Activated CD4-positive, alpha-beta T cell treated with anti-CD3 and anti-CD28 coated beads, Interleukin-2, amount 10 ng/mL, durations not matched to agents 7 days and 5 days (primary cell): ENCODE measurements at regions of chr1 and their contacts with region 1.

Region 1: DNA sequence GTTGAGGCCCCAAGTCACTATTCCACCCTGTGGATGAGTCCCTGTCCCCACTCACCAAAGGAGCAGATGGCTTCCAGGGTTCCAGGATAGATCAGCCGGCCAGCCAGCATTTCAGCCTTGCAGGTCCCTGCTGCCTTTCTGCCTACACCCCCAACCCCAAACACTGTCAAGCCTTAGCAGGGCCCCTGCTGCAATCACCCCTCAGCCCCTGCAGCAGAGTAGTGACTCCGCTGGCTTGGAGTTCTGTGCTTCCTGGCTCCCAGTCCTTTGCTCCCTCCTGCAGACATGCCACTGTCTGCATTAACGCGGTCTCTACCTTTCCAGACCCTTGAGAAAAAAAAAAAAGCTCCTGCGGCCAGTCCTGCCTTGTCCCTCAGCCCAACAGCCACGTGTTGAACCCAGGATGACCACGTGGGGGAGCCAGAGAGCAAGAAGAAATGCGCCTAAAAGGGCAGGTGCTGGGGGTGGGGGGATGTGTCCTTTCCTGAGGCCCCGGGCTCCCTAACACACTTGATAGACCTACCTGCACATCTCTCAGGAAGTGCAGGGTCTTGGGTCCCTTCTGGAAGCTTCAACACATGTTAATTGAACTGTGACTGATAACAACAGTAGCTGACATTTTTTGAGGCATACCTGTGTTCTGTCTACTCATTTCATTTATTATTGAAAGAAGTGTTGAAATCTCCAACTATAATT is 37.4 kb downstream of the RASSF5 start:
- DNase-seq: peak; percentile 85
- H3K4me3 Mint-ChIP-seq: no peak overlapping the region
- H3K27ac Mint-ChIP-seq: peak overlapping the region; percentile 60
- H3K4me1 Mint-ChIP-seq: peaks cover 25% of the 10 kb centered on the region
- H3K27me3 Mint-ChIP-seq: no peaks in the 10 kb centered on the region

Region 2: DNA sequence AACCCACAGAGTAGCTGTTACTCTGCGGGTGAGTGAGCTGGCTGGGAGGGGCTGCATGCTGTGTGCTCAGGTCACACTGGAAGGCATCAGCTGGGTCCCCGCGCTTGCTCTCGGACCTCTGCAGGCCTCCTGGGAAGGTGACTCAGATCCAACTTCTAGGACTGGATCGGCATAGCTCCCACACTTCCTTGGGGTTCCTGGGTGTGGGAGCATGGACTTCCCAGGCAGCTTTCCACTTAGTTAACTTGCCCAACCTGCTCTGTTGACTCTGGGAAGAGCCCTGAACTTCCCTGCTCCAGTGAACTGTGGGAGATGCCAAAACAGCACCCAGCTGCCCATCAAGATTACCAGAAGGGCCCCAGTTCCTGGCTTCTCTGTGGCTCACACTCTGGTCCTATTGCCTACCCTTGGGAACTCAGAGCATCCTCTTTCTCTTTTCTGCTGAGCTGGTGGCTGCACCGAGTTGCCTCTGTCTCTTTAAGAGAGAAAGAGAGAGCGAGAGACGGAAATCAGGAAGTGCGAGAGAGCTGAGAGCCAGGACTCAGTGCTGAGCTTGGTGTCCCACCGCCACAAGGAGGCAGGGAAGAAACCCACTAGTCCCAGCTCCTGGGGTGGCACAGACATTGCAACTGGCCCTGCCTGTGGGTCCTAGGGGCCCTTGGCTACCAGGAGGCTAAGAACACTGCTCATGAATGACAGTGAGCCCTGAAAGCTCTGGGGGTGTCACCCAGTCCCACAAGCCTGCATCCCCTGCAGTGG is 74.6 kb before region 1 on chr1 and contains the start of gene IKBKE:
- CTCF ChIA-PET with region 1: interaction called, 10 read pairs
- POLR2A ChIA-PET with region 1: no interaction called
- DNase-seq: peak; percentile 73
- H3K4me3 Mint-ChIP-seq: peak within 1 kb of the TSS; percentile 78
- H3K27ac Mint-ChIP-seq: peak within 1 kb of the TSS; percentile 72
- H3K4me1 Mint-ChIP-seq: peaks cover 88% of the 10 kb centered on the region
- H3K27me3 Mint-ChIP-seq: no peaks in the 10 kb centered on the region
- total RNA-seq, gene IKBKE: 72.6 to 85.1 TPM

Region 3: DNA sequence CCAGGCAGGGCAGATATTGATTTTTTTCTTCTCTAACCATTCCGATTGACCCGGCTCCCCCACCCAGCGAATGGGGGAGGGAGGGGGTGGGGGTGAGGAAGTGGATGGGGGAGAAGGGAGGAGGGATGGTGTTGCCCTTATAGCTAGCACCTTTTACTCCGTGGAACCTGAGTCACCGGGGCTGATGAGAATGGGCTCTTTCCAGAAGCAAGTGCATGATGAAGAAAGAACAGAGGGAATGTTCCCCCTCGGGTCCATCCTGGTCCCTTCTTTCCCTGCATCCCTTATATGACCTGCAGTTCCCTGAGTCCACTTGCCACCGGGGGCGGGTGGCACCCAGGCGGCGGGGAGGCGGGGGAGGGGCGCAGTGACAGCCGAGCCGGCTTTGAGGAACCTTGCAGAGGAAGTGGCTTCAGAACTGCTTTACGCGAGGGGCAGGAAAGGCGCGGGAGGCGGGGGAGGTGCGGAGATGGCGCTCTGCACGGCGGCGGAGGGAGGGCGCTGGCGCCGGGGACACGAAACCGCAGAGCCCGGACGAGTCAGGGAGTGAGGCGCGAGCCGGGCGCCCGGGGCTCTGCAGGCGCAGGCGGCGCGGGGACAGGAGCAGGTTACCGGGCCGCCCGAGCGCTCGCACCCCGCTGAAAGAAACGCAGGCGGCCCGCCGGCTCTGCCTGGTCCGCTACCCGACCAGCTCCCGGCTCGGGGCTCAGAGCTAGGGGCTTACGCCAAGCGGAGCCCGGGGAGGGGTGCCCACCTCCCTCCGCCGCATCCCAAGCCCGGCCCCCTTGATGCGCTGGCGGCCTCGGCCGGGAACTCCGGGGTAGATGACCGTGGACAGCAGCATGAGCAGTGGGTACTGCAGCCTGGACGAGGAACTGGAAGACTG is 12.3 kb after region 1 on chr1:
- CTCF ChIA-PET with region 1: interaction called, 41 read pairs
- POLR2A ChIA-PET with region 1: no interaction called
- DNase-seq: peak; percentile 92
- H3K4me3 Mint-ChIP-seq: peak overlapping the region; percentile 87
- H3K27ac Mint-ChIP-seq: peak overlapping the region; percentile 92
- H3K4me1 Mint-ChIP-seq: peaks cover 72% of the 10 kb centered on the region
- H3K27me3 Mint-ChIP-seq: no peaks in the 10 kb centered on the region

Region 4: DNA sequence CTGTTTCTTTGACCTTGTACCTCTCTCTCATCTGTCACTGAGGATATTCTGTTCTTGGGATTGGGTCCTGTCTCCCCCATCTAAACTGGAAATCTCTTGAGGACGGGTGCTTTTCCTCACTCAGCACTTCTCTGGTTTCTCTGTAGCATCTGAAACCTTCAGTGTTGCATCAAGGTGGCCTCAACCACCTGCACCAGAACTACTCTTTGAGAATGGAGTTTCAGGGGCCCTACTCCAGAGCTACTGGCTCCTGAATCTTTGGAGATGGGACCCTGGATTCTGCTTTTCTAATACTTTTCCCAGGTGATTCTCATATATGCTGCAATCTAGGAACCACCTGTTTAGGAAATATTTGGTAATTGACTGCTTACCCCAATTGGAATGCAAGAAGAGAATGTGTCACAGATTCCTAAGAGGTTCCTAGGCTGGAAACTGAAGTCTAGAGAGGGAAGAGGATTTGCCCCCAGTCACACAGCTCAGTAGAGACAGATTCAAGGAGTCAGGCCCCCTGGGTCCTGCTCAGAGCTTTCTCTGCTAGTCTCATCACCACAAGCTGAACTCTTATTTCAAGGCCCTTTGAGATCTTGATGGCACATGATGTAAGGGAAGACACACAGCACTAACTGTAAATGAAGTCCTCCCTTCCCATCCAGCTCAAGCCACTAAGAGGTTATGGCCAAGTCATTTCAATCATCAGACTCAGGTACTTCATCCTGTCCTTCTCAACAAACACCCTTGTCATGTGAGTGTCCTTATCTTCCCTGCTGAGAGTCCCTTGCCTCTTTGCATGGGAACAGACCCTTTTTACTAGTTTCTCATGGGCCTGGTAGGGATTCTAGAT is 18.9 kb after region 1 on chr1:
- CTCF ChIA-PET with region 1: interaction called, 41 read pairs
- POLR2A ChIA-PET with region 1: interaction called, 3 read pairs
- DNase-seq: no peak
- H3K4me3 Mint-ChIP-seq: peak overlapping the region; percentile 67
- H3K27ac Mint-ChIP-seq: peak overlapping the region; percentile 86
- H3K4me1 Mint-ChIP-seq: peaks cover 92% of the 10 kb centered on the region
- H3K27me3 Mint-ChIP-seq: no peaks in the 10 kb centered on the region